Activated T-helper 1 cell treated with anti-CD3 and anti-CD28 coated beads, Interleukin-12 subunit alpha, Interleukin-12 subunit beta, Interleukin-2, Interleukin-4 antibody, amounts not matched to agents 30 ng/mL and 10 ng/mL and 1 ng/mL, durations not matched to agents 14 hours and 24 hours and 36 hours (primary cell): ENCODE measurements at regions of chr10 and their contacts with region 1.

Region 1: DNA sequence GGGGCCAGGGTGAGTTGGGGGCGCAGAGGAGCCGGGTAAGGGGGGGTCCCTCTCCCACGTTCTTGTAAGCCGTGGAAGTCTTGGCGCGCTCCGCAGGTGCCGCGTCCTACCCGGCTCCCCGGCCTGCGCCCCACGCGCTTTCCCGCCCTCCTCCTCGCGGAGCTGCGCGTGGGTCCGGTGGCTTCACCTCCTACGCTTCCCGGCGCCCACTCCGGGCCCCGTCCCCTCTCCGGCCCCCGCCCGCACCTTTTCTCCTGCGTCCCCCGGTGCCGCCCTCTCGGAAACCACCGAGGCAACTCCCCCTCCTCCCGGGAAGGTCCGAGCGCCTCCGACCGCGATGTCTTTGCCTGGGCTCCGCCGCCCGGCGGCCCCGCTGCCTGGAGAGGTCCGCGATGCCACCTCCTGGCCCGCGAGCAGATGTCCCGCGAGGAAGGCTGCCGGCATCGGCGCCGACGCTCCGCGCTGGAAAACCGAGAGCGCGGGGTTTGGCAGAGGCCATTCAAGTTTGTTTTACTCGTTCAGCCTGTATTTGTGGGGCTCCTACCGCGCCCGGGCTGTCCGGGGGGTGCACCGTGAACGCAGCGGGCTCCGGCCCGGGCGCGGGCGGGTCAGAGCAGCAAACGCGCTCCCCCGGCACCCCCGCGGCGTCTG is 2.4 kb upstream of the NKX6-2 start:
- DNase-seq: no peak
- H3K4me3 Mint-ChIP-seq: no peak overlapping the region
- H3K27ac Mint-ChIP-seq: no peak overlapping the region
- H3K4me1 Mint-ChIP-seq: no peaks in the 10 kb centered on the region
- H3K27me3 Mint-ChIP-seq: peaks cover 12% of the 10 kb centered on the region

Region 2: GRCh38 chr10:133039107-133039802 is 250.9 kb after region 1 on chr10:
- intact Hi-C with region 1: no loop called
- DNase-seq: no peak
- H3K4me3 Mint-ChIP-seq: no peak overlapping the region
- H3K27ac Mint-ChIP-seq: no peak overlapping the region
- H3K4me1 Mint-ChIP-seq: no peaks in the 10 kb centered on the region
- H3K27me3 Mint-ChIP-seq: peaks cover 2% of the 10 kb centered on the region

Region 3: GRCh38 chr10:133226251-133226808 is 438.0 kb after region 1 on chr10:
- intact Hi-C with region 1: loop called (anchors 5 kb)
- DNase-seq: no peak
- H3K4me3 Mint-ChIP-seq: peak overlapping the region; percentile 56
- H3K27ac Mint-ChIP-seq: no peak overlapping the region
- H3K4me1 Mint-ChIP-seq: peaks cover 18% of the 10 kb centered on the region
- H3K27me3 Mint-ChIP-seq: peaks cover 34% of the 10 kb centered on the region